ENCODE measurements at regions of chr7 and their contacts with region 1.

Region 1: DNA sequence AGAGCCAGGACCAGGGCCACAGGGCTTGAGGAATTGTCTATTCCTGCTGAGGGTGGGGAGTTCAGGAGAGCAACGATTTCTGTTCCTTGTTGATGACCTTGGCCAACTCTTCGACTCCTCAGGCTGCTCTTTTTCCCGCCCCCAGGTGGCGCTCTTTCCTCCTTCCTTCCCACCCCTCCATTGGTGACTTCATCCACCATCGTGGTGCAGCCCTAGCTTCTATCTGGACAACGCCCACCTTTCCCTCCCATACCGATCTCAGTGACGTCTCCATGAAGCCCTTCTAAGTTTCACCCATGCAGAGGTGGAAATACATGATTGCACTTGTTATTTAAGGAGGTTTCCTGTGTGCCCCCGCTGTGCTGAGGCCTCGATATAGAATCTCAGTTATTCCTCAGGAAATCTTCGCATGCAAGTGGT is 22.1 kb upstream of the CARD11 start:
- DNase-seq: peak in 13 of 14 experiments; percentile 44 to 82 (median 52)
- ATAC-seq: peak; percentile 36
- H3K4me3 ChIP-seq: no peak overlapping the region
- H3K4me3 Mint-ChIP-seq: peak overlapping the region; percentile 56
- H3K27ac ChIP-seq: peak overlapping the region in 1 of 2 donors; percentile 18
- H3K27ac Mint-ChIP-seq: peak overlapping the region; percentile 86
- H3K4me1 ChIP-seq: peaks cover 82% of the 10 kb centered on the region
- H3K4me1 Mint-ChIP-seq: peaks cover 84% of the 10 kb centered on the region
- H3K27me3 ChIP-seq: no peaks in the 10 kb centered on the region
- H3K27me3 Mint-ChIP-seq: no peaks in the 10 kb centered on the region
- CTCF ChIP-seq: peak; percentile 70

Region 2: DNA sequence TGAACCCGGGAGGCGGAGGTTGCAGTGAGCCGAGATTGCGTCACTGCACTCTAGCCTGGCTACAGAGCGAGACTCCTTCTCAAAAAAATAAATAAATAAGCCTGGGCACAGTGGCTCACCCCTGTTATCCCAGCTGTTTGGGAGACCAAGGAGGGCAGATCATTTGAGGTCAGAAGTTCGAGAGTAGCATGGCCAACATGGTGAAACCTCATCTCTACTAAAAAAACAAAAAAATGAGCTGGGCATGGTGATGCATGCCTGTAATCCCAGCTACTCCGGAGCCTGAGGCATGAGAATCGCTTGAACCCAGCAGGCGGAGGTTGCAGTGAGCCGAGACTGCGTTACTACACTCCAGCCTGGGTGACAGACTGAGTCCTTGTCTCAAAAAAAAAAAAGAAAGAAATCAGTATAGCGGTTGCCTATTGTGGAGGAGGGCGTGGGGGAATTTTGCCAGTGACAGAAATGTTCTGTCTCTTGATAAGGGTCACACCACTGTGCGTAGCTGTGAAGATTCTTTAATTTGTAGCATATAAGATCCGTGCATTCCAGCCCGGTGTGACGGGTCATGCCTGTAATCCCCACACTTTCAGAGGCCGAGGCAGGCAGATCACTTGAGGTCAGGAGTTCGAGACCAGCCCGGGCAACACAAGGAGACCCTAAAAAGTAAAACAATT is 729.0 kb before region 1 on chr7:
- CTCF ChIA-PET with region 1: no interaction called
- POLR2A ChIA-PET with region 1: no interaction called
- intact Hi-C with region 1: no loop called
- DNase-seq: no peak
- ATAC-seq: no peak
- H3K4me3 ChIP-seq: no peak overlapping the region
- H3K4me3 Mint-ChIP-seq: no peak overlapping the region
- H3K27ac ChIP-seq: no peak overlapping the region
- H3K27ac Mint-ChIP-seq: no peak overlapping the region
- H3K4me1 ChIP-seq: no peaks in the 10 kb centered on the region
- H3K4me1 Mint-ChIP-seq: no peaks in the 10 kb centered on the region
- H3K27me3 ChIP-seq: no peaks in the 10 kb centered on the region
- H3K27me3 Mint-ChIP-seq: no peaks in the 10 kb centered on the region
- CTCF ChIP-seq: no peak

Region 3: DNA sequence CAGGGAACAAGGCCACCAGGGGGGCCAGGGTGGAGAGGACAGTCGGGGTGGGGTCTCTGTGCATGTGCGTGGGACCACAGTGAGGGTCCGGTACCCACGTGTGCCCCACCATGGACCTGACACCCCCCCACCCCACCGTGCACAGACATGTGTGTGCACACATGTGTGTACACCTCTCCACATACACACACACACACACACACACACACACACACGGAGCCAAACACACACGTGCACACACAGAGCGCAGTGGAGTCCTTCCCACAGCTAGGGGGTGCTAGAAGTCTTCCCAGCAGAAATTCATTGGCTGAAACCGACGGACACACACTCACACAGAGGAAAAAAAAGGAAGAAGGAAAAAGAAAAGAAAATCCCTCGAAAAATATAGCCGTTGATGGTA is 178.8 kb before region 1 on chr7:
- CTCF ChIA-PET with region 1: no interaction called
- POLR2A ChIA-PET with region 1: no interaction called
- intact Hi-C with region 1: loop called in 1 of 2 experiments (anchors 5 kb)
- DNase-seq: peak in 13 of 14 experiments; percentile 23 to 82 (median 37)
- ATAC-seq: peak; percentile 70
- H3K4me3 ChIP-seq: no peak overlapping the region
- H3K4me3 Mint-ChIP-seq: peak overlapping the region; percentile 16
- H3K27ac ChIP-seq: no peak overlapping the region
- H3K27ac Mint-ChIP-seq: no peak overlapping the region
- H3K4me1 ChIP-seq: peaks cover 6% of the 10 kb centered on the region
- H3K4me1 Mint-ChIP-seq: peaks cover 5% of the 10 kb centered on the region
- H3K27me3 ChIP-seq: no peaks in the 10 kb centered on the region
- H3K27me3 Mint-ChIP-seq: no peaks in the 10 kb centered on the region
- CTCF ChIP-seq: peak; percentile 63

Region 4: DNA sequence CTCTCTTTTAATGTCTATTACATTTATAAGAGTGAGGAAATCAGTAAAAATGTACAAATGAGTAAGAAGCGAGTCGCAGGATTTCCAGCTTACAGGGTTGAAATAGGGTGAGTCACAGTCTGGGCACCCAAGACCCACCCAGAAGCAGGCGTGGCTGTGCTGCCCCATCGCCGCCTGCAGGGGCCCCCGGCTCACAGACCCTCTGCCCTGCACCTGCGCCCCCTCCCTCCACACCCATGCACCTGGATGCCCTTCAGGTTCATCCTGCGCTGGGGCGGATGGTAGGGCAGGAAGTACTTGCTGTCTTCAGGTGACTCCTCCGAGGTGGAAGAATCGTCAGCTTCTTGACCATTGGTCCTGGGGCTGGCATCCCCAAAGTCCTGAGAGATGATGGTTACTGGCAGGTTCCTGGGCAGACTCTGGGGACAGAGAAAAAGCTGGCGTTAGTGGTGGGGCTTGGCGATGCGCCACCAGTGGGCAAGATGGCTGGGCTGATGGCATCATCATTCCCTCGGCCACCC is 131.5 kb before region 1 on chr7:
- CTCF ChIA-PET with region 1: no interaction called
- POLR2A ChIA-PET with region 1: no interaction called
- intact Hi-C with region 1: no loop called
- DNase-seq: peak in 1 of 14 experiments; percentile 30
- ATAC-seq: no peak
- H3K4me3 ChIP-seq: no peak overlapping the region
- H3K4me3 Mint-ChIP-seq: no peak overlapping the region
- H3K27ac ChIP-seq: no peak overlapping the region
- H3K27ac Mint-ChIP-seq: peak overlapping the region; percentile 33
- H3K4me1 ChIP-seq: no peaks in the 10 kb centered on the region
- H3K4me1 Mint-ChIP-seq: no peaks in the 10 kb centered on the region
- H3K27me3 ChIP-seq: no peaks in the 10 kb centered on the region
- H3K27me3 Mint-ChIP-seq: no peaks in the 10 kb centered on the region
- CTCF ChIP-seq: no peak

Region 5: DNA sequence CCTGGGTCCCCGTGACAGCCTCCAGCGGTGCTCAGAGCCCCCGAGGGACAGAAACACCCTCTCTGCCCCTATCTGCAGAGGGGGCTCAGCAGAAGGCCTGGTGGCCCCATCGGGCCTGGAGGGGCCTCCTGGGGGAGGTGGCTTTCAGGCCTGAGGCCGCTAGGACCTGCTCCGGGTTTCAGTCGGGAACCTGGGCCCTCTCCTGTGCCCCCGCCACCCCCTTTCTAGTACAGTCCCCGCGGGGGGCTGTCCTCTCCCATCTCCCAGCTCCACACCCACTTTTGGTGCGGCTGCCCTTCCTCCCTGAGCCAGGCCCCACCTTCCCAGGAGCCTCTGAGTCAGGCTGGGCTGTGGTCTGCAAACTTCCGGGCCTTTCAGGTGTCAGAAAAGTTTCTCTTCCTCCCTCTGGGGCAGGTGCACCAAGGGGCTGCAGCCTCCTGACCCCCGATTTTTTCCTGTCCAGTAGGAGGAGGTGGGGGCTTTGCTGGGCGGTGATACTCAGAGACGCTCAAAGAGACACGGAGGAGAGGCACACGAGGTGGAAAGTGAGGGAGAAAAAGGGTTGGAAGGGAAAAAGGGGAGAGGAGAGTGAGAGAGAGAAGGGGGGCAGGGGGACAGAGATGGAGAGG is 22.8 kb before region 1 on chr7:
- CTCF ChIA-PET with region 1: interaction called, 3 read pairs
- POLR2A ChIA-PET with region 1: interaction called, 21 read pairs
- intact Hi-C with region 1: no loop called
- DNase-seq: peak; percentile 23 to 86 (median 66)
- ATAC-seq: peak; percentile 75
- H3K4me3 ChIP-seq: peak overlapping the region; percentile 89
- H3K4me3 Mint-ChIP-seq: peak overlapping the region; percentile 93
- H3K27ac ChIP-seq: peak overlapping the region; percentile 74 to 99
- H3K27ac Mint-ChIP-seq: peak overlapping the region; percentile 85
- H3K4me1 ChIP-seq: peaks cover 60% of the 10 kb centered on the region
- H3K4me1 Mint-ChIP-seq: peaks cover 70% of the 10 kb centered on the region
- H3K27me3 ChIP-seq: no peaks in the 10 kb centered on the region
- H3K27me3 Mint-ChIP-seq: no peaks in the 10 kb centered on the region
- CTCF ChIP-seq: no peak

Region 6: GRCh38 chr7:3087243-3087642 is 21.5 kb after region 1 on chr7:
- CTCF ChIA-PET with region 1: interaction called, 14 read pairs
- POLR2A ChIA-PET with region 1: interaction called, 28 read pairs
- intact Hi-C with region 1: loop called (anchors 2 kb)
- DNase-seq: no peak
- ATAC-seq: no peak
- H3K4me3 ChIP-seq: no peak overlapping the region
- H3K4me3 Mint-ChIP-seq: no peak overlapping the region
- H3K27ac ChIP-seq: no peak overlapping the region
- H3K27ac Mint-ChIP-seq: no peak overlapping the region
- H3K4me1 ChIP-seq: peaks cover 33% of the 10 kb centered on the region
- H3K4me1 Mint-ChIP-seq: peaks cover 41% of the 10 kb centered on the region
- H3K27me3 ChIP-seq: no peaks in the 10 kb centered on the region
- H3K27me3 Mint-ChIP-seq: no peaks in the 10 kb centered on the region
- CTCF ChIP-seq: no peak

Region 7: GRCh38 chr7:3092468-3092867 is 26.7 kb after region 1 on chr7:
- CTCF ChIA-PET with region 1: interaction called, 14 read pairs
- POLR2A ChIA-PET with region 1: interaction called, 28 read pairs
- intact Hi-C with region 1: loop called (anchors 2 kb)
- DNase-seq: peak; percentile 45 to 92 (median 65)
- ATAC-seq: peak; percentile 78
- H3K4me3 ChIP-seq: peak overlapping the region; percentile 8
- H3K4me3 Mint-ChIP-seq: peak overlapping the region; percentile 75
- H3K27ac ChIP-seq: peak overlapping the region; percentile 78 to 83
- H3K27ac Mint-ChIP-seq: peak overlapping the region; percentile 97
- H3K4me1 ChIP-seq: peaks cover 72% of the 10 kb centered on the region
- H3K4me1 Mint-ChIP-seq: peaks cover 67% of the 10 kb centered on the region
- H3K27me3 ChIP-seq: no peaks in the 10 kb centered on the region
- H3K27me3 Mint-ChIP-seq: no peaks in the 10 kb centered on the region
- CTCF ChIP-seq: no peak

Region 8: GRCh38 chr7:3154912-3155494 is 89.3 kb after region 1 on chr7:
- CTCF ChIA-PET with region 1: interaction called, 4 read pairs
- POLR2A ChIA-PET with region 1: no interaction called
- intact Hi-C with region 1: loop called (anchors 1 kb)
- DNase-seq: peak; percentile 30 to 81 (median 51)
- ATAC-seq: peak; percentile 87
- H3K4me3 ChIP-seq: no peak overlapping the region
- H3K4me3 Mint-ChIP-seq: no peak overlapping the region
- H3K27ac ChIP-seq: no peak overlapping the region
- H3K27ac Mint-ChIP-seq: no peak overlapping the region
- H3K4me1 ChIP-seq: no peaks in the 10 kb centered on the region
- H3K4me1 Mint-ChIP-seq: peaks cover 12% of the 10 kb centered on the region
- H3K27me3 ChIP-seq: no peaks in the 10 kb centered on the region
- H3K27me3 Mint-ChIP-seq: no peaks in the 10 kb centered on the region
- CTCF ChIP-seq: peak; percentile 81

Region 9: DNA sequence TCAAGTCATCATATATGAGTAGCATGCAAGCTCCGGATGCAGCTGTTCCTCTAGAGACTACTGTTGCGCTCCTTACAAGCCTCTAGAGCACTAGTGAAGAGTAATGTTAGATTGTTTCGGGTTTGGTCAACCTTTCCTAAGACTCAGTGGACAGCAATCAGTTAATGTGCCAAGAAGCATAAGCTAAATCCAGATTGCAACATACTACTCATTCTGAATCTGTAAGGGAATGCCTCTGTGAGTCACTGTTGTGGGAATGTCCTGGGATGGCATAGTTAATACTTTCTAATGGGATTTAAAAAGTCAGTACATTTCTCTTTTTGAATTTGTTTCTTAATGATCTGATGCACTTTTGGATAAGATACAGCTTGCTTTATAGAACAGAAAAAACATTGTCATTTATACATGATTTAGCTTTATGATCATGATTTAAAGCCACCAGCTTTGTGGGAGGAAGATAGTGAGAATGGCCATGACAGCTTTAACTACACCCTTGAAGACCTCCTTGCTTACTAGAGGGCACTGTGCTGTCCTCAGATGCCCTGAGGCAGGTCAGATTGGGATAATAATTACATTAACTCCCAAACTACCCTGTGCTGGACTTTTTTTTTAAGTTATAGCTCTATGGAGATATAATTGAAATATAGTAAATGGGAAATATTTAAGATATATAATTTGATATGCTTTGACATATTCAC is 373.7 kb after region 1 on chr7:
- CTCF ChIA-PET with region 1: no interaction called
- POLR2A ChIA-PET with region 1: no interaction called
- intact Hi-C with region 1: no loop called
- DNase-seq: no peak
- ATAC-seq: no peak
- H3K4me3 ChIP-seq: no peak overlapping the region
- H3K4me3 Mint-ChIP-seq: no peak overlapping the region
- H3K27ac ChIP-seq: no peak overlapping the region
- H3K27ac Mint-ChIP-seq: no peak overlapping the region
- H3K4me1 ChIP-seq: no peaks in the 10 kb centered on the region
- H3K4me1 Mint-ChIP-seq: no peaks in the 10 kb centered on the region
- H3K27me3 ChIP-seq: no peaks in the 10 kb centered on the region
- H3K27me3 Mint-ChIP-seq: no peaks in the 10 kb centered on the region
- CTCF ChIP-seq: no peak